Lower leg skin (tissue), 4 donors: ENCODE measurements at regions of chr1 and their contacts with region 1.

Region 1: DNA sequence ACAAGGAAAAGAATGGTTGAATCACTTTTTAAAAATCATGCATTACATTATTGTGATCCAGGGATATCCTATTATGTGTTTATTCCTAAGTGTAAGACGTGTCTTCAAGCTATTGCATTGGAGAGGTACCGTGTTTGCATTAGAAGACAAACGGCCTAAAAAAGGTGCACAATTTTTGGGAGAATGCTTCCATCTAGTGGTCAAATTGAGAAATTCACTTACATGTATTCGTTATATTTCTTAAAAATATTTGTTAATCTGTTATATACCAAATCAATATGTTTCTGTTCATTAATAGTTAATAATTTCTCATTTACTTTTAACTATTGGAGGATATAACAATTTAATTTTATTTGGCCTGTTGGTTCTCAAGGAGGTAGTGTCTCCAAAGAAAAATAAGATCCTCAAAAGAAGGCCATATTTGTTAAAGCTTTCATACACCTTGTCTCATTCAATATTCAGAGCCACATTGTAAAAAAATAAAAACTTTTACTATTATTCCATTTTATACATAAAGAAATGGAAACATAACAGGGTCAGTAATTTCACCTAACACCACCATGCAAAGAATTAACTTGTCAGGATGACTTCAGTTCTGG is 40.5 kb upstream of the KCTD3 start:
- DNase-seq: no peak
- H3K4me3 ChIP-seq: no peak overlapping the region
- CTCF ChIP-seq: peak in 1 of 3 donors; percentile 48
- POLR2A ChIP-seq: no peak

Region 2: DNA sequence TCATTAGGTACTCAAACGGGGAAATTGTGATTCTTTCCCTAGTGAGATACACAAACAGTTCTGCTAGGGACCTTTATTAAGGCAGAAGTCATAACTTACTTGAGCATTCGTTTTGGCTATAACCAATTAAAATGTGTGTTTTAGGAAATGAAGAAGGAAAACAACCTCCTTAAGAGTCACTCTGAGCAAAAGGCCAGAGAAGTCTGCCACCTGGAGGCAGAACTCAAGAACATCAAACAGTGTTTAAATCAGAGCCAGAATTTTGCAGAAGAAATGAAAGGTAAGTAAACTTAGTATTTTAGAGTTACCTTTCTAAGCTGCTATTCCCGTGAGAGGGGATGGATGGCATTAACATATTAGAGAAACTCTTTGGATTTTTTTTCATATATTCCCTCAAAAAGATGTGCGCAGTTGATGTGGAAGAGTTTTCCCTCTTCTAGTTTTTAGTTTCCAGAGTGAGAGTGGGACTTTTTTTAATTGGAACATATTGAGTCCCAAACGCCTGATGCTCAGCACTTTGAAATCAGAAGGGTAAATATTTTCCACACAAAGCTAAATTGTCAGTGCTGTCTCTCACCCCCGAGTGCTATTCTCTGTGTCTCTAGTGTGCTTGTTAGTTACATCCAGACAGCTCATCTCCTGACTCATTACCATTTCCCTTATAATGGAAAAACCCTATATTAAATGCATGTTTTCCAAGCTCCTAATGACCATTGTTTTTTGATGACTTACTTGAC is 888.8 kb before region 1 on chr1:
- intact Hi-C with region 1: loop called (anchors 10 kb)
- DNase-seq: no peak
- H3K4me3 ChIP-seq: no peak overlapping the region
- CTCF ChIP-seq: no peak
- POLR2A ChIP-seq: no peak